ENCODE measurements at regions of chr2 and their contacts with region 1.

Region 1: GRCh38 chr2:100262555-100263320 is 59.6 kb downstream of the LONRF2 start:
- DNase-seq: peak; percentile 42
- H3K4me3 Mint-ChIP-seq: no peak overlapping the region
- H3K27ac Mint-ChIP-seq: no peak overlapping the region
- H3K4me1 Mint-ChIP-seq: peaks cover 1% of the 10 kb centered on the region
- H3K27me3 Mint-ChIP-seq: no peaks in the 10 kb centered on the region

Region 2: DNA sequence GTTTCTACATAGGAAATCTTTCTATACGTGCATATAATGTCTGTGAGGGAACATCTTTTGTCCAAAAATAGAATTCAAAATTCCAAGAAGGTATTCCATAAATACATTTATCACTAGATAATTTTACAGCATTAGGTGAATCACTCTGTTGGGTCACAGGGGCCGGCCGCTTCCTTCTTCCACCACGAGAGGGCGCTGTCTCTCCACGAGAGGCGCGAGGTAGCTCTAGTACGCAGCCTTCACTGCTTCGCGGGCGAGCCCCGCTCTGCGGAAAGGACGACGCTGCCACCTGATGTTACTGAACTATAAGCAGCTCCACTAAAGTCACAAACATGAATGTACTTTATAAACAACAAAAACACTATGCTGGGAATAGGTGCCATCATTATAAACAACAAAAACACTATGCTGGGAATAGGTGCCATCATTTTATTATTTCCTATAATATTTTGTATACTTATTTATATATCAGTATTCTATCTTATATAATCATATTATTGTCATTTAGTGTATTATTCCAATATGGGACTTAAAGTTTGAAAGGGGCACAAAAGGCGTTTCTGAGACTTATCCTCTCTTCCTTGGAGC is 703.6 kb before region 1 on chr2:
- intact Hi-C with region 1: loop called (anchors 5 kb)
- DNase-seq: peak; percentile 67
- H3K4me3 Mint-ChIP-seq: no peak overlapping the region
- H3K27ac Mint-ChIP-seq: no peak overlapping the region
- H3K4me1 Mint-ChIP-seq: no peaks in the 10 kb centered on the region
- H3K27me3 Mint-ChIP-seq: peaks cover 11% of the 10 kb centered on the region

Region 3: GRCh38 chr2:100008956-100009355 is 253.8 kb before region 1 on chr2:
- intact Hi-C with region 1: no loop called
- DNase-seq: no peak
- H3K4me3 Mint-ChIP-seq: no peak overlapping the region
- H3K27ac Mint-ChIP-seq: no peak overlapping the region
- H3K4me1 Mint-ChIP-seq: no peaks in the 10 kb centered on the region
- H3K27me3 Mint-ChIP-seq: peaks cover 3% of the 10 kb centered on the region

Region 4: DNA sequence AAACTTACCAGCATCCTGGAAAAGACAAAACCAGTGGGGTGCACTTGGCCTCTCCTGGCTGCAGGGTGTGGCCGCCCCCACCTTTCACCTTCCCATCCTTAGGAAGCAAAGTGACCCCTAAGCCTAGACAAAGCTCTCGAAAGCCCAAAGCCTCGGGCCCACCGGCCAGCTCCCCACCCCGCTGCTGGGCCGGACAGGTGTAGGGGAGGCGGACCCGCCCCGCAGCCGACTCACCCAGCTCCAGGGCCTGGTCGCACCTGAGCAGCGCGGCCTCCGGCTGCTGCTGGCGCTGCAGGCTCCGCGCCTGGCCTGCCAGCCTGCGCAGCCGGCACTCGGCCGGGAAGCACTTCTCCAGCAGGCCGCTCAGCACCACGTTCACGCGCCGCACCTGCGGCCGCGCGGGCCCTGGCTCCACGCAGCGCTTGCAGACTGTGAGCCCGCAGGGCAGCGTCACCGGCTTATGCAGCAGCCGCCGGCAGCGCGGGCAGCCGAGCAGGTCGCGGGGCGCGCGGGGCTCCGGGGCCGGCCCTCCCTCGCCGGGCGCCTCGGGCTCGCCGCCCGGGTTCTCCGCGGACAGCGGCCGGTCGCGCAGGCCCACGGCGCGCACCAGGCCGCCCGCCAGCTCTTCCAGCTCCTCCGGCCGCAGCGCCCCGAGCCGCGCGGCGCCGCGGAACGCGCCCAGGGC is 58.6 kb after region 1 on chr2:
- intact Hi-C with region 1: loop called (anchors 5 kb)
- DNase-seq: no peak
- H3K4me3 Mint-ChIP-seq: peak overlapping the region; percentile 57
- H3K27ac Mint-ChIP-seq: no peak overlapping the region
- H3K4me1 Mint-ChIP-seq: peaks cover 2% of the 10 kb centered on the region
- H3K27me3 Mint-ChIP-seq: peaks cover 66% of the 10 kb centered on the region

Region 5: GRCh38 chr2:100381240-100381639 is 118.5 kb after region 1 on chr2:
- intact Hi-C with region 1: loop called (anchors 1 kb)
- DNase-seq: peak; percentile 57
- H3K4me3 Mint-ChIP-seq: no peak overlapping the region
- H3K27ac Mint-ChIP-seq: no peak overlapping the region
- H3K4me1 Mint-ChIP-seq: peaks cover 4% of the 10 kb centered on the region
- H3K27me3 Mint-ChIP-seq: peaks cover 22% of the 10 kb centered on the region

Region 6: GRCh38 chr2:100653449-100654035 is 390.8 kb after region 1 on chr2:
- intact Hi-C with region 1: no loop called
- DNase-seq: no peak
- H3K4me3 Mint-ChIP-seq: no peak overlapping the region
- H3K27ac Mint-ChIP-seq: no peak overlapping the region
- H3K4me1 Mint-ChIP-seq: peaks cover 31% of the 10 kb centered on the region
- H3K27me3 Mint-ChIP-seq: no peaks in the 10 kb centered on the region